ENCODE measurements at regions of chr20 and their contacts with region 1.

Region 1: DNA sequence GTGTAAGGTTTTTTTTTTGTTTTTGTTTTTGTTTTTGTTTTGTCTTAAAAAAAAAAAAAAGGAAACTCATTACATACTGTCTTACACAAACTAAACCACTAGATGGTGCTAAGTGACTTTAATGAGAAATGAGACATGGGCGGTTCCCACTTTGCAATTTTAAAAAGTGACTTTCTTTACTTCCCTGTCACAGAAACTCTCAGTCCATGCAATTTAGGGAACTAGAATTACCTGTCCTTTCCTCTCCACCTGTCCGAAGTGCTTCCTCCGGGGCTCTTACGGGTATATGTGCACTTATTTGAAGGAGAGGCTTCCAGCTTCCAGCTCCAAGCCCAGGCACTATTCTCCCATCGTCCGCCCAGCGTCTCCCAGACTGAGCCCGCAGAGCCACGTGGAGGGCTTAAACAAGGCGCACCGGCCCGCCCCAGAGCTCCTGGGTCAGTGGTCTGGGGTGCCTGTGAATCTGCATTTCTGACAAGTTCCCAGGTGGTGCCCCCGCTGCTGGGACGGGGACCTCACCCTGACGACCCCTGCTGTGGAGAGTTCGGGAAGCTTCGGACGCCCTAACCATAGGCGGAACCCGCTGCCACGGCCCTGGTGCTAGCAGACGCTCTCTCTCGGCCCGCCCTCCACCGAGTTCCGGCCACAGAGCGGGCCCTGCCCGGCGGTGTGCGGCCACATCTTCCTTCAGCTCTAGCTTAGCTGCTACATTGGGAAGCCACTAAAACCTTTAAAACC is 26.1 kb downstream of the BFSP1 start:
- DNase-seq: peak; percentile 69
- H3K4me3 Mint-ChIP-seq: peak overlapping the region; percentile 84
- H3K27ac Mint-ChIP-seq: peak overlapping the region; percentile 93
- H3K4me1 Mint-ChIP-seq: peaks cover 65% of the 10 kb centered on the region
- H3K27me3 Mint-ChIP-seq: peaks cover 45% of the 10 kb centered on the region

Region 2: GRCh38 chr20:17471606-17472187 is 33.4 kb before region 1 on chr20:
- CTCF ChIA-PET with region 1: no interaction called
- DNase-seq: no peak
- H3K4me3 Mint-ChIP-seq: no peak overlapping the region
- H3K27ac Mint-ChIP-seq: no peak overlapping the region
- H3K4me1 Mint-ChIP-seq: no peaks in the 10 kb centered on the region
- H3K27me3 Mint-ChIP-seq: peaks cover 9% of the 10 kb centered on the region

Region 3: GRCh38 chr20:17617551-17618223 is 112.6 kb after region 1 on chr20:
- CTCF ChIA-PET with region 1: interaction called, 18 read pairs
- DNase-seq: peak; percentile 59
- H3K4me3 Mint-ChIP-seq: no peak overlapping the region
- H3K27ac Mint-ChIP-seq: peak overlapping the region; percentile 69
- H3K4me1 Mint-ChIP-seq: peaks cover 3% of the 10 kb centered on the region
- H3K27me3 Mint-ChIP-seq: no peaks in the 10 kb centered on the region

Region 4: DNA sequence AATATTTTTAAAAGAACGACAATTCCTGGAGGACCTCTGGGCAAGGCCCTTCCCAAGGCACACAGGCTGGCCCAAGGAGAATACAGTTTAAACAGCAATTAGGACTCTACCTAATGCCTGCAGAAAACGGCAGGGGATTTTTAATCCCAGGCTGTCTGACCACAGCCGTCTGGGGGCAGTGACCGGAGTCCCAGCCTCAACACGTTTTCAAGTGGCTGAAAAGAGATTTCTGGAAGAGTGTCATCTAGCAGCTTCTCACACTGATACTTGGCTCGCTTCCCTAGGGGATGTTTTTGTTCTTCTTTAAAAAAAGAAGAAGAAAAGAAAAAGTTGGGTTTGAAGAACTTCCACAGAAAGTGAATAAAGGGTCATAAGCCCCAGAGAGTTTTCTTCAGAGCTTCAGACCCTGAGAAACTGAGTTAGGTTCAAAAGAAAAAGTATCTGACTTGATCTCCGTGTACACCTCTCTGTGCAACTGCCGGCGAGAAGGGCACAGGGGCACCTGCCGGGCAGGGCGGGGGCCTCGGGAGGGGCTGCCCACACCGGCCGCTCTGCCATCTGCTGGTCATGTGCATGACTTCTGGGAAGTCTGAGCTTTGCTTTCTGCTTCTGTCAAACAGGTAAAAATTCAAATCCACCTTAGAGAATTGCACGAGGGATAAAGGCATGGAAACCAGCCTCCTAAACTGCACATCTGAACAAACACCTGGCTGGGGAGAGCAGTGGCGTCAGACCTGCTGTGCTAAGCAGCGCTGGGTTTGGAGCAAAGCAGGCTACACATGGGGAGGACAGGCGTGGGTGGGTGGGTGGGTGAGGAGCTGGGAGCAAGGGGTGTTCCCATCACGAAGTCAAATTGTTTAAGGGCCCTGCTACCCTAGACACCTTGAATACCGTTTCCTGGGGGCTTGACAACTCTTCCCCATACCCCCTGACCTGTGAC is 144.0 kb after region 1 on chr20:
- CTCF ChIA-PET with region 1: interaction called, 10 read pairs
- DNase-seq: peak; percentile 55
- H3K4me3 Mint-ChIP-seq: no peak overlapping the region
- H3K27ac Mint-ChIP-seq: no peak overlapping the region
- H3K4me1 Mint-ChIP-seq: peaks cover 11% of the 10 kb centered on the region
- H3K27me3 Mint-ChIP-seq: no peaks in the 10 kb centered on the region

Region 5: GRCh38 chr20:17662333-17663039 is 157.4 kb after region 1 on chr20:
- CTCF ChIA-PET with region 1: no interaction called
- DNase-seq: no peak
- H3K4me3 Mint-ChIP-seq: no peak overlapping the region
- H3K27ac Mint-ChIP-seq: no peak overlapping the region
- H3K4me1 Mint-ChIP-seq: peaks cover 45% of the 10 kb centered on the region
- H3K27me3 Mint-ChIP-seq: no peaks in the 10 kb centered on the region

Region 6: GRCh38 chr20:17682103-17682888 is 177.2 kb after region 1 on chr20 and contains the start of gene RRBP1:
- CTCF ChIA-PET with region 1: interaction called, 14 read pairs
- DNase-seq: peak; percentile 98
- H3K4me3 Mint-ChIP-seq: peak within 1 kb of the TSS; percentile 85
- H3K27ac Mint-ChIP-seq: peak within 1 kb of the TSS; percentile 92
- H3K4me1 Mint-ChIP-seq: peaks cover 34% of the 10 kb centered on the region
- H3K27me3 Mint-ChIP-seq: peaks cover 42% of the 10 kb centered on the region

Region 7: GRCh38 chr20:17898548-17898994 is 393.5 kb after region 1 on chr20:
- CTCF ChIA-PET with region 1: interaction called, 16 read pairs
- DNase-seq: peak; percentile 77
- H3K4me3 Mint-ChIP-seq: no peak overlapping the region
- H3K27ac Mint-ChIP-seq: no peak overlapping the region
- H3K4me1 Mint-ChIP-seq: peaks cover 13% of the 10 kb centered on the region
- H3K27me3 Mint-ChIP-seq: peaks cover 62% of the 10 kb centered on the region

Region 8: DNA sequence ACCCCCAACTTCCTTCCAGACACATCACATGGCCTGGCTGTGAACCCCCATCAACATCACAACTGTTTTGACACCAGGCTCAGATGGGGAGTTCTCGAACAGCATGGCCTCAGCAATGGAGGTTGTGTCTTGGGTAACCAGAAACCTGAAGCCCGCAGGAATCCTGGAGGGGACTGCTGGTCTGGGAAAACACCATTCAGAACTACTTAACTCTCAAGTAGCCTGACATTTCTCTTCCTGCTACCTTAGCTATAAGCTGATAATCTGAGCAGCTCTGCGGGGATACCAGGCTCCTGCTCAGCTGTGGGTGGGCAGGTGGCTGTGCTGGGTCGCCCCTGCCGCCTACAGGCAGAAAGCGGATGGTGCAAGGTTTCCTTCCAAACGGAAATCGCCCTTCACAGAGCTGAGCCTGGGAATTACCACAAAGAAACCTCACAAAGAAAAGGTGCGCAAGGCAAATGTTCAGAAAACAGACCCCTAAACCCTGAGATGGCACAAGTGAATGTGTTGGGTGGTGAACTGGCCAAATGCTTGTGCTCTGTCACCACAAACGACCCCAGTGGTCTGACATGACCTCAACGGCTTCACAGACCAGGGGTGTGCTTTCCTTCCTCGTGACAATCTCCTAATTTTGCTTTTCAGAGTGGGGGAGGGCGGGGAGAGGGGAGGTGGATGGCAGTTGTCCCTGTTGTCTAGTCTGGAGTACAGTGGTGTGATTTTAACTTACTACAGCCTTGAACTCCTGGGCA is 434.0 kb after region 1 on chr20:
- CTCF ChIA-PET with region 1: interaction called, 11 read pairs
- DNase-seq: peak; percentile 69
- H3K4me3 Mint-ChIP-seq: no peak overlapping the region
- H3K27ac Mint-ChIP-seq: peak overlapping the region; percentile 64
- H3K4me1 Mint-ChIP-seq: peaks cover 20% of the 10 kb centered on the region
- H3K27me3 Mint-ChIP-seq: no peaks in the 10 kb centered on the region

Region 9: DNA sequence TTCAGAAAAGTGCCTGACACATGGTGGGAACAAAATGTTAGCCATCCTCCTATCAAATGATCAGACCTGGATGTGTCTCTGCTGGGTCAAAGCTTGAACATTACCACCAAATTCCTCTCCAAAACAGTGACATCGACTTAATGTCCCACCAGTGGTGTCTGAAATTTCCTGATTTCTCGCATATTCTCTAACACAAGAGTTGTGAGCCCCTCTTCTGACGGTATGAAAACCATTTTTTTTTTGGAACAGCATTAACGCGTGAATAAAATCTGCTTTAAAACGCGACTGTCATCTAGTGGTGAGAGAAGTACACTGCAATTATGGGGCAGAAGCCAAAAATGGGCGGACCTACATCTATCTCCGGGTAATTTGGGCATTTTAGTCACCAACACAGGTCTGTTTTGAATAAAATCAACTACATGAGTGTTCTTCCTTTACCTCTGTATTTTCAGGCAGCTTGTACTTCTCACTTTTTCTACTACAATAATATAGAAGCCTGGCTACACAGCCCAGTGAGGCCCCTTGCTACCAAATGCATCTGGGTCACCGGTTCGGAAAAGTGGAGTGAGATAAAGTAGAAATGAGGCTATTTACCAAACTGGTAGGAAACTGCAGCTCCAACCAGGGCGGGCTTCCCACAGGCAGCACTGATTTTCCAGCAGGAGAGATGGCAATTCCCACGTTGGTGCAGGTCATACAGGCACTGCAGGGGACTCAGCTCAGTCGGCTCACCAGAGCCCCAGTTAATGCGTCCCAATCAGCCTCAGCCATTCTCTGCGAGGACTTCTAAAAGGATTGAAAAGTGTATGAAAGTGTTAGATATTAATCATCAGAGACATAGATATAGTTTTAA is 491.1 kb after region 1 on chr20:
- CTCF ChIA-PET with region 1: interaction called, 13 read pairs
- DNase-seq: peak; percentile 57
- H3K4me3 Mint-ChIP-seq: no peak overlapping the region
- H3K27ac Mint-ChIP-seq: no peak overlapping the region
- H3K4me1 Mint-ChIP-seq: peaks cover 41% of the 10 kb centered on the region
- H3K27me3 Mint-ChIP-seq: peaks cover 18% of the 10 kb centered on the region